A549 (cell line): ENCODE measurements at regions of chr2 and their contacts with region 1.

Region 1: GRCh38 chr2:138827426-138828054 is 47.4 kb upstream of the NXPH2 start:
- DNase-seq: peak; percentile 30 to 74
- ATAC-seq: peak; percentile 79 to 87; a peak in 5 of 6 replicates
- H3K4me3 ChIP-seq: no peak overlapping the region
- H3K27ac ChIP-seq: no peak overlapping the region
- H3K4me1 ChIP-seq: no peaks in the 10 kb centered on the region
- CTCF ChIP-seq: peak; percentile 77
- EP300 ChIP-seq: no peak
- POLR2A ChIP-seq: no peak
- RAD21 ChIP-seq: peak; percentile 82 to 83

Region 2: GRCh38 chr2:137865954-137866540 is 961.5 kb before region 1 on chr2:
- CTCF ChIA-PET with region 1: interaction called, 25 read pairs
- POLR2A ChIA-PET with region 1: no interaction called
- DNase-seq: peak; percentile 5 to 67
- ATAC-seq: peak; percentile 88 to 93
- H3K4me3 ChIP-seq: no peak overlapping the region
- H3K27ac ChIP-seq: no peak overlapping the region
- H3K4me1 ChIP-seq: no peaks in the 10 kb centered on the region
- CTCF ChIP-seq: peak; percentile 81
- EP300 ChIP-seq: no peak
- POLR2A ChIP-seq: no peak
- RAD21 ChIP-seq: peak; percentile 81 to 90

Region 3: GRCh38 chr2:137888845-137889244 is 938.7 kb before region 1 on chr2:
- CTCF ChIA-PET with region 1: interaction called, 64 read pairs
- POLR2A ChIA-PET with region 1: no interaction called
- DNase-seq: peak; percentile 8 to 61
- ATAC-seq: peak; percentile 46 to 64; a peak in 3 of 6 replicates
- H3K4me3 ChIP-seq: no peak overlapping the region
- H3K27ac ChIP-seq: no peak overlapping the region
- H3K4me1 ChIP-seq: no peaks in the 10 kb centered on the region
- CTCF ChIP-seq: peak; percentile 61
- EP300 ChIP-seq: no peak
- POLR2A ChIP-seq: no peak
- RAD21 ChIP-seq: peak; percentile 62 to 74

Region 4: GRCh38 chr2:137910641-137911040 is 916.9 kb before region 1 on chr2:
- CTCF ChIA-PET with region 1: interaction called, 83 read pairs
- POLR2A ChIA-PET with region 1: no interaction called
- DNase-seq: peak in 1 of 2 experiments; percentile 12
- ATAC-seq: no peak
- H3K4me3 ChIP-seq: no peak overlapping the region
- H3K27ac ChIP-seq: no peak overlapping the region
- H3K4me1 ChIP-seq: peaks cover 6% of the 10 kb centered on the region; the same call in 2 of the 3 replicates
- CTCF ChIP-seq: peak; percentile 82
- EP300 ChIP-seq: no peak
- POLR2A ChIP-seq: no peak
- RAD21 ChIP-seq: peak; percentile 77 to 95

Region 5: DNA sequence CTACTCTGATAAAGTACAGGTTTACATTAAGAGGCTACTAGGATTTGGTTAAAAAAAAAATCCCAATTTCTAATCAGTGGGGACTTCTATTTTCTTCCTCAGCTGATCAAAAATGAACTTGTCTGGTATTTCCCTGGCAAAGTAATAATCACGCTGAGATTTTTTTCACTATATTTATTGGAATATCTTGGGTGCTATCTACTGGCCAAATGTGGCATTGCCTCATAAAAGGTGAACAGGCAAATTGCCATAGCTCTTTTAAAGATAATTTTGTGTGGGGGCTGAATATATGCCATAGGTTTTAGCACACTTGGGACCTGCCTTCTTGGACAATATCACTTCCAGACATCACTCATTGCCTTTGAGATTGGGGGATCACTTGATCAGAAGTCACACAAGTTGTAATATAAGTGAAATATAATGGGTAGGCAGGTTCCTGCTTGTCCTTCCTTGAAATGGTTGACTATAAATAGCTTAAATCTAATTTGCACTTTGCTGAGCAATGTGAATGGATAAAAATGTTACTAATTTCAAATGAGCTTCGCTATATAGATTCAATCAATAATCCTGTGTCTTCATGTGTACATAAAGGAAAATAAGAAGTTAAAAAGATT is 40.4 kb before region 1 on chr2:
- CTCF ChIA-PET with region 1: interaction called, 22 read pairs
- POLR2A ChIA-PET with region 1: no interaction called
- DNase-seq: peak in 1 of 2 experiments; percentile 25
- ATAC-seq: peak; percentile 43 to 58; a peak in 4 of 6 replicates
- H3K4me3 ChIP-seq: no peak overlapping the region
- H3K27ac ChIP-seq: no peak overlapping the region
- H3K4me1 ChIP-seq: no peaks in the 10 kb centered on the region
- CTCF ChIP-seq: peak; percentile 84
- EP300 ChIP-seq: no peak
- POLR2A ChIP-seq: no peak
- RAD21 ChIP-seq: peak; percentile 85 to 88

Region 6: DNA sequence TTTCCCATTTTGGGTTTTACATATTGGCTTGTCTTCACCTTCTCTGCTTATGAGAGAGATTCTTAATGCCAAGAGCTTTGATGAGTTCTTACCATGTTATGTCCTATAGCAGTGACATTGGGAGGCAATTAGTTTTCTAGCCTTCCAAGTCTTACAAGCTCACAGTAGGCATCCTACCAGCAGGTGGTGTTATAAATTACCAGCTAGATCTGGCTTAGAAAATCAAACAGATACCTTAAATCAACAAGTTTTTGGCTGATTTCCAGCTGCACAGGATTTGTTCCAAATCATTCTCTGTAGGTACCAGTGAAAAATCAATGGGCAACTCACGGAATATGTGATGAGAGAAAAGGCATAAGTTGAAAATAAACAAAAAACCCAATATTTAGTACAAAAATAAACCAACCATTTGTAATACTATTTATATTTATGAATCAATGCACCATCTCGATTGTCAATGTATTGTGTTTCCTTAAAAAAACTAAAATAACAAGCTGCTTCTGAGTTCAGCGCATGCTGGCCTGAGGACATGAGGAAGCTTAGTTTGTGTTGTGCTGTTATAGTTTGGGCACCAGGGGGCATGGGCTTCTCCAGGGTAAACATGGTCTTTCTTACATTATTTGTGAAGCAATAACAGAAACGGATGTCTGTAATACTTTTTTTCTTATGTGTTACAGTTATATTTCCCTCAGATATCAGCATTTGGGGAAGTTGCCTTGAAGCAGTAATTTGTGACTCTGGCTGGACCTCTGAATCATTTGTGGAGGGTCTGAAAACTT is 13.2 kb before region 1 on chr2:
- CTCF ChIA-PET with region 1: interaction called, 32 read pairs
- POLR2A ChIA-PET with region 1: no interaction called
- DNase-seq: peak in 1 of 2 experiments; percentile 18
- ATAC-seq: peak in 1 of 2 experiments; percentile 70; a peak in 3 of 6 replicates
- H3K4me3 ChIP-seq: no peak overlapping the region
- H3K27ac ChIP-seq: no peak overlapping the region
- H3K4me1 ChIP-seq: no peaks in the 10 kb centered on the region
- CTCF ChIP-seq: no peak
- EP300 ChIP-seq: no peak
- POLR2A ChIP-seq: no peak
- RAD21 ChIP-seq: no peak

Region 7: DNA sequence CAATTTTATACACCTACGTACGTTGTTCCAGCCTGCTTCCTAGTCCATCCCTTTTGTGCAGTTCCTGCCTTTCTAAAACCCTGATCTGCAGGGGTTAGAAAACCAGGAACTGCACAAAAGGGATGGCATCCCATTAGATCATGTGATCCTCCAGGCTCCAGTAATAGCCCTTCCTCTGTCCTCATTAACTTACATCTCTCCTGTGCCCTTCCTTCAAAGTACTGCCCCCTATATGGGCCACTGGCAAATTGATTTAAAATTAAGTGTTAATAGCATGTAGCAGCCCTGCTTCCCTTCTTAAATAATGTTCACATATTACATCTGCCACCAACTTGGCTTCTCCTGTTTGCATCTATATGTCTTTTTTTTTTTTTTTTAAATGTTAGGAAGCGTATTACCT is 13.9 kb after region 1 on chr2:
- CTCF ChIA-PET with region 1: interaction called, 28 read pairs
- POLR2A ChIA-PET with region 1: no interaction called
- DNase-seq: no peak
- ATAC-seq: no peak
- H3K4me3 ChIP-seq: no peak overlapping the region
- H3K27ac ChIP-seq: no peak overlapping the region
- H3K4me1 ChIP-seq: no peaks in the 10 kb centered on the region
- CTCF ChIP-seq: no peak
- EP300 ChIP-seq: no peak
- POLR2A ChIP-seq: no peak
- RAD21 ChIP-seq: no peak

Region 8: DNA sequence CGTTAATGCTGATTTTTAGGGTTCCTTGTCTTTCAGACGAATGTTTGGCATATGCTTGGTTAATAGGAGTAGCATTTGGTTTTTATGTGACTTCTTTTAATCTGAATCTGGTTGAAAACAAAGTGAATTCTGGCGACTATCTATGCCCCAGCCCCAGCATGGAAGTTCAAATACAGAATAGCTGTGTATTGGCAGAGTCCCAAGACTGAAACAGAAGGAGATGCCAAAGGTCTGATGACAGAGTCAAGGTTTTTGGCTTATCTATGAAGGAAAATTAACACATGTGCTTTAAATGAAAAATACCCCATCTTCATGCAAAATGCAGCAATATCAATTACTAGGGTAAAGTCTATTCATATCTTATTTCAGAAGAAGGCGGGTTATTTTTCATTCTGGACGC is 687.4 kb after region 1 on chr2:
- CTCF ChIA-PET with region 1: no interaction called
- POLR2A ChIA-PET with region 1: no interaction called
- DNase-seq: no peak
- ATAC-seq: no peak
- H3K4me3 ChIP-seq: no peak overlapping the region
- H3K27ac ChIP-seq: no peak overlapping the region
- H3K4me1 ChIP-seq: no peaks in the 10 kb centered on the region
- CTCF ChIP-seq: no peak
- EP300 ChIP-seq: no peak
- POLR2A ChIP-seq: no peak
- RAD21 ChIP-seq: no peak